ENCODE measurements at regions of chr16 and their contacts with region 1.

Region 1: DNA sequence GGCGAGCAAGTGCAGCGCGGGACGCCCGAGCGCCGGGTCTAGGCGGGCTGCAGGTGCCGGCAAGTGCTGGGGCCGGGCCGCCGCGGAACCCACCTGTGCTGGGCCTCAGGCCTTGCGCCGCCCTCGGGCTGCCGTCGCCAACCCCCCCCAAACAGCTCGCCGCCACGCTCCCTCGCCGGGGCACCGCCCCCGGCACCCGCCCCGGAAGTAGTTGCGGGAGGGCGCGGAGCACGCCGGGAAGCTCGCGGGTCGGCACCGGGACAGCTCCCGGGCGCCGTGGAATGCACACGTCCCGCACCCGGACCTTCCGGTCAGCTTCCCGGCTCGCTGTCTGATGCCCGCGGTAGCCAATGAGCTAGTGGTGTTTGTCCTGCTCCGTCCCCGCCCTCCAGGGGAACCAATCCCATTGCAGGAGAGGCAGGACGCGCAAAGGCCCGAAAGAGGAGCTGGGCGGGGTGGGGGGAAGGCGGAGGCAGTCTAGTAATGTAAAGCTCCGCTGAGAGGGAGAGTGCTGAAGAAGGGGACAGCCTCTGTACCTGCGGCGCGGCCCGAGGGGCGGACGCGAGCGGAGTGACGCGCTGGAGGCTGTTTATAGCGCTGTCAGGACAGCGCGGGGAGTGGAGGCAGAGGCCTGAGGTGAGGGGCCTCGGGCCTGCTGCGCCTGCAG is at the starts of genes ANKS3 and DNAAF8:
- DNase-seq: peak; percentile 92
- CTCF ChIP-seq: no peak

Region 2: DNA sequence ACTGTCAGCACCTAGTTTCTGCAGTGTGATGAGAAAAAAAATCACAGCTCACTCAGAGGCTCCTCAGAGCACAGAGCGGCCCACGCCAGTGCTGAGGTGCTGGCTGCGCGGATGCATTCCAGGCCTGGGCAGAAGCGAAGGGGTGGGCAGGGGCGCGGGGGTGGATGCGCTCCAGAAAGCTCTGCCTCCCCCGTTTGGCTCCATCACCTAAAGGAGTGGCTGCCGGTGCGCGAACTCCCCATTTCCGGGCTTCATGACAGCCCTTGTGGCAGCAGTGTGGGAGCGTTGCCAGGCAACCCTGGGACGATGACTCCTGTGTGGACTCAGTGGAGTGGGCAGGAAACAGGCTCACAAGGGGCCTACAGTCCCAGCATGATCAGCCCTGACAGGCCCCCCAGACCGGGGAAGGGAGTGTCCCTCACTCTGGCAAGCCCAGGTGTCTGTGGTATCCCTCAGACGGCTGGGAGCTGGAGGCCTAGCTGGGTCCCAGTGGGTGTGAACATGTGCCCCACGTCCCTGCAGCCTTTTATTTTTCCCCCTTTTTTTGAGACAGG is 73.7 kb before region 1 on chr16:
- CTCF ChIA-PET with region 1: no interaction called
- POLR2A ChIA-PET with region 1: no interaction called
- DNase-seq: peak; percentile 85
- CTCF ChIP-seq: no peak

Region 3: GRCh38 chr16:4746991-4747574 is 12.9 kb after region 1 on chr16:
- CTCF ChIA-PET with region 1: interaction called, 10 read pairs
- POLR2A ChIA-PET with region 1: interaction called, 8 read pairs
- DNase-seq: no peak
- CTCF ChIP-seq: no peak

Region 4: GRCh38 chr16:4805231-4805630 is 71.0 kb after region 1 on chr16:
- CTCF ChIA-PET with region 1: no interaction called
- POLR2A ChIA-PET with region 1: interaction called, 11 read pairs
- DNase-seq: no peak
- CTCF ChIP-seq: no peak